SK-N-SH (cell line): ENCODE measurements at regions of chrX and their contacts with region 1.

Region 1: DNA sequence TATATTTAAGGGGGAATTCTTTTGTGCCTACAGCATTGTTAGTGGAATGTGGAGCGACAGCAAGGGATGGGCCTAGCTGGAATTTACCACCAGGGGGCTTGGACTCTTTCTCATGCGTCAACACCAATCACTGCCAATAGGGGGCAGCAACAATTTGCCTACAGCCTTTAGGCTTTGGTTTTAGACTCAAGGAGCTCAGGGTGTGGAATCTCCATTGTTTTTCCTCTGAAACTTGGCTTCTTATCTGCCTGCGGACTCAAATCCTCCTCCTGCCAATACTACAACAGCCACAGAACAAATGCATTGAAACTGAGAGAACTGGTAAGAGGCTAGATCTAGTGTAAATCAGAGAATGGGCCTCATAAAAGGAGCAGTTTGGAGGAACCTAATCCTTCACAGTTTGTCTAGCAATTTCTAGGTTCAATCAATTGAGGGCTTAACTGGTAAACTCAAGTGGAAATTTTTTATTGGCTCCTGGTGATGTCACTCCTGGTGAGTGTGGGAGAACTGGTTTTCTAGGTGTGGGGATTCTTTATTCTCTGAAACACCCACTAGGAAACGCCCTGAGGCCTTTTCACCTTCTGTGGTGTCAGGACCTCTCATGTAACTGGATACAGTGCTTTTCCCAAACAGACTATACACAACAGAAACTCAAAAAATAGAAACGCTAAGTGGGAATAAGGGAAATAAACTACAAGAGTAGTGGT is 27.9 kb upstream of the TMSB4X start:
- DNase-seq: peak; percentile 62
- H3K4me3 ChIP-seq: peak overlapping the region in 1 of 2 experiments; percentile 5; a peak in 1 of 4 replicates
- H3K27ac ChIP-seq: peak overlapping the region; percentile 76 to 85
- H3K4me1 ChIP-seq: peaks cover 12 to 33% of the 10 kb centered on the region in 2 experiments; a peak in 3 of 4 replicates
- H3K27me3 ChIP-seq: no peaks in the 10 kb centered on the region
- CTCF ChIP-seq: peak; percentile 100
- EP300 ChIP-seq: peak; percentile 29 to 50; a peak in 1 of 4 replicates
- RAD21 ChIP-seq: peak; percentile 85

Region 2: GRCh38 chrX:12223650-12224049 is 723.3 kb before region 1 on chrX:
- CTCF ChIA-PET with region 1: no interaction called
- POLR2A ChIA-PET with region 1: no interaction called
- DNase-seq: no peak
- H3K4me3 ChIP-seq: no peak overlapping the region
- H3K27ac ChIP-seq: no peak overlapping the region
- H3K4me1 ChIP-seq: no peaks in the 10 kb centered on the region
- H3K27me3 ChIP-seq: no peaks in the 10 kb centered on the region
- CTCF ChIP-seq: no peak
- EP300 ChIP-seq: no peak
- RAD21 ChIP-seq: no peak

Region 3: GRCh38 chrX:12936947-12937346 is 10.0 kb before region 1 on chrX:
- CTCF ChIA-PET with region 1: interaction called, 10 read pairs
- POLR2A ChIA-PET with region 1: no interaction called
- DNase-seq: no peak
- H3K4me3 ChIP-seq: no peak overlapping the region
- H3K27ac ChIP-seq: no peak overlapping the region
- H3K4me1 ChIP-seq: no peaks in the 10 kb centered on the region
- H3K27me3 ChIP-seq: no peaks in the 10 kb centered on the region; the same call in 1 of the 2 replicates
- CTCF ChIP-seq: no peak
- EP300 ChIP-seq: no peak
- RAD21 ChIP-seq: no peak

Region 4: GRCh38 chrX:12967711-12968465 is 20.9 kb after region 1 on chrX:
- CTCF ChIA-PET with region 1: interaction called, 11 read pairs
- POLR2A ChIA-PET with region 1: no interaction called
- DNase-seq: no peak
- H3K4me3 ChIP-seq: no peak overlapping the region
- H3K27ac ChIP-seq: no peak overlapping the region
- H3K4me1 ChIP-seq: peaks cover 0 to 5% of the 10 kb centered on the region in 2 experiments; a peak in 1 of 4 replicates
- H3K27me3 ChIP-seq: no peaks in the 10 kb centered on the region
- CTCF ChIP-seq: no peak
- EP300 ChIP-seq: no peak
- RAD21 ChIP-seq: no peak

Region 5: GRCh38 chrX:12978205-12979010 is 31.4 kb after region 1 on chrX:
- CTCF ChIA-PET with region 1: interaction called, 13 read pairs
- POLR2A ChIA-PET with region 1: interaction called, 3 read pairs
- DNase-seq: no peak
- H3K4me3 ChIP-seq: peak overlapping the region; percentile 12 to 96; a peak in 2 of 4 replicates
- H3K27ac ChIP-seq: peak overlapping the region; percentile 90 to 98
- H3K4me1 ChIP-seq: peaks cover 0 to 7% of the 10 kb centered on the region in 2 experiments; a peak in 1 of 4 replicates
- H3K27me3 ChIP-seq: no peaks in the 10 kb centered on the region
- CTCF ChIP-seq: no peak; the same call in 1 of the 2 replicates
- EP300 ChIP-seq: 0 out of 4 replicates have a peak, but pooled peaks of 1 of the 2 experiments have one; percentile 22
- RAD21 ChIP-seq: no peak

Region 6: GRCh38 chrX:13069771-13070416 is 122.9 kb after region 1 on chrX:
- CTCF ChIA-PET with region 1: no interaction called
- POLR2A ChIA-PET with region 1: no interaction called
- DNase-seq: no peak
- H3K4me3 ChIP-seq: no peak overlapping the region
- H3K27ac ChIP-seq: no peak overlapping the region
- H3K4me1 ChIP-seq: no peaks in the 10 kb centered on the region; a peak in 1 of 4 replicates
- H3K27me3 ChIP-seq: no peaks in the 10 kb centered on the region
- CTCF ChIP-seq: no peak
- EP300 ChIP-seq: no peak
- RAD21 ChIP-seq: no peak

Region 7: GRCh38 chrX:13473442-13474163 is 526.6 kb after region 1 on chrX:
- CTCF ChIA-PET with region 1: interaction called, 10 read pairs
- POLR2A ChIA-PET with region 1: no interaction called
- DNase-seq: no peak
- H3K4me3 ChIP-seq: no peak overlapping the region
- H3K27ac ChIP-seq: peak overlapping the region; percentile 24 to 57; a peak in 2 of 4 replicates
- H3K4me1 ChIP-seq: peaks cover 0 to 6% of the 10 kb centered on the region in 2 experiments; a peak in 3 of 4 replicates
- H3K27me3 ChIP-seq: no peaks in the 10 kb centered on the region
- CTCF ChIP-seq: no peak
- EP300 ChIP-seq: no peak
- RAD21 ChIP-seq: no peak

Region 8: DNA sequence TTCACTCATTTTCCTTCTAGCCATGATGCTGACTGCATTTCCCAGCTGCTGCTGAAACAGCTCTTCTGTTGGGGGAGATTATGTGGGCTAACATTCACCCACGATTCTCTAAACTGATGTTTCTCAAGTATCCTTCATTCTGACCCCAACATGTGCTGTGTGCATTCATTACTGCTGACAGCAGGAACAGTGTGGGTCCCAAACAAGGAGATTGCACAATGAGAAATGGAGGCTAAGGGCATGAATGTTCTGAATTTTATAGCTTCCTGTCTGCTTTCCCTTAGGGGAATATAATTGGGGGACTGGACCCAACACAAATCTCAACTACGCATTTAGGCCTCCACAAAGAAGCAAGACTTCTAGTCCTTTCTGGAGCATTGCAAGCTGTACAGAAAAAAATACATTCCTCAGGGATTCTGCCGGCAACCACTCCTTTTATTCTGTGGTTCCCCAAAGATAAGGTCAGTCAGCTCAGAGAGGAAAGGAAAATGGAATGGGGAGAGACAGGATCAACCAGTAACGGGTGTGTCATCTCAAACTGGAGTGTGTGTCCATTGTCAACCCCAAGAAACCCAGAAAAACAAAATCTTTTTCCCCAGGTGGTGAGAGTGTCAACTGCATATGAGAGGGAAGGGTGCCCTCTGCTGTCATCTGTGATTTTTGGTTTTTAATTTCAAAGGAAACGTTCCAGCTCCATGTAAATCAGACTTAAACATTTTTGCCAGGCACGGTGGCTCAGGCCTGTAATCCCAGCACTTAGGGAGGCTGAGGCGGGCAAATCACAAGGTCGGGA is 540.9 kb after region 1 on chrX:
- CTCF ChIA-PET with region 1: interaction called, 124 read pairs
- POLR2A ChIA-PET with region 1: no interaction called
- DNase-seq: peak; percentile 48
- H3K4me3 ChIP-seq: no peak overlapping the region; a peak in 1 of 4 replicates
- H3K27ac ChIP-seq: peak overlapping the region; percentile 92 to 97
- H3K4me1 ChIP-seq: peaks cover 0 to 11% of the 10 kb centered on the region in 2 experiments; a peak in 3 of 4 replicates
- H3K27me3 ChIP-seq: no peaks in the 10 kb centered on the region
- CTCF ChIP-seq: peak; percentile 78
- EP300 ChIP-seq: peak in 1 of 2 experiments; percentile 34; a peak in 1 of 4 replicates
- RAD21 ChIP-seq: peak; percentile 88